Esophagus muscularis mucosa (tissue), 4 donors: ENCODE measurements at regions of chr11 and their contacts with region 1.

Region 1: DNA sequence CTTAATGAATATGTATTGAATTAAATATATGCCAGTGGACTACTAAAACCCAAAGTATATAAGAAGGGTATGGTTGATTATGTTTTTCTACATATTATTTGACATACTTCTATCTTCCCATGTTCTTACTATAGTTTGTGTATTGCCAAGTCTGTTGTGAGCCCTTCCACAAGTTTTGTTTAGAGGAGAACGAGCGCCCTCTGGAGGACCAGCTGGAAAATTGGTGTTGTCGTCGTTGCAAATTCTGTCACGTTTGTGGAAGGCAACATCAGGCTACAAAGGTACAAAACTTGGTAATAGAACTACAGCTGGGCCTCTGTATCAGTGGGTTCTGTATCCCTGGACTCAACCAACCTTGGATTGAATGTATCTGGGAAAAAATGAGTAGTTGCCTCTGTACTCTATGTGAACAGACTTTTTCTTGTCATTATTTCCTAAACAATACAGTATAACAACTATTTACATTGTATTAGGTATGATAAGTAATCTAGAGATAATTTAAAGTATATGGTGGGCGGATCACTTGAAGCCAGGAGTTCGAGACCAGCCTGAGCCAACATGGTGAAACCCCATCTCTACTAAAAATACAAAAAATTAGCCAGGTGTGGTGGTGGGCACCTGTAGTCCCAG is 38.7 kb upstream of the TTC36 start:
- DNase-seq: no peak
- H3K4me3 ChIP-seq: no peak overlapping the region
- H3K27ac ChIP-seq: no peak overlapping the region
- H3K4me1 ChIP-seq: no peaks in the 10 kb centered on the region
- H3K27me3 ChIP-seq: no peaks in the 10 kb centered on the region
- CTCF ChIP-seq: peak; percentile 76 to 82 (median 79)
- EP300 ChIP-seq: no peak
- POLR2A ChIP-seq: no peak

Region 2: GRCh38 chr11:118145285-118146227 is 343.0 kb before region 1 on chr11:
- intact Hi-C with region 1: loop called (anchors 5 kb)
- DNase-seq: peak; percentile 94
- H3K4me3 ChIP-seq: peak overlapping the region; percentile 55 to 84 (median 66)
- H3K27ac ChIP-seq: peak overlapping the region in 3 of 4 donors; percentile 44 to 63 (median 60)
- H3K4me1 ChIP-seq: peaks cover 14 to 17% (median 16%) of the 10 kb centered on the region in 4 donors
- H3K27me3 ChIP-seq: peaks cover 0 to 41% (median 4%) of the 10 kb centered on the region in 4 donors
- CTCF ChIP-seq: peak; percentile 89 to 93 (median 93)
- EP300 ChIP-seq: no peak
- POLR2A ChIP-seq: no peak

Region 3: DNA sequence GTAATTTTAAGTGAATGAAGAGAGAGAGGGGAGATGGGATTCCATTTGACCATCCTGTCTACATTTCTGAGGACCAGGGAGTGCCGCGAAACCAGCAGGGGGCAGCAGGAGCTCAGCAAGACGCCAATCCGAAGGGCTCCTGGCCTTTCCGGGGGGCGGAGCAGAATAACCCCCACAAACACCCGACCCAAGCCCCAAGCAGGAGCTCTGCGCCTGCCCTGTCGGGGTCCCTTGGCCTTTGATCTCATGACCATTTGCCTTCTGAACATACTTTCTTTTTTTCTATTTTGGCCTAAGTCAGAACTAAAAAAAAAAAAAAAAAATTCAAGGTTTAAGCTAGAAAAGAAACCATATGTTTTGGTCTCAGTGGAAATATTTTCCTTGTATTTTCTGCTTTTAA is 290.2 kb before region 1 on chr11:
- intact Hi-C with region 1: loop called (anchors 10 kb)
- DNase-seq: no peak
- H3K4me3 ChIP-seq: peak overlapping the region in 3 of 4 donors; percentile 19 to 36 (median 23)
- H3K27ac ChIP-seq: no peak overlapping the region
- H3K4me1 ChIP-seq: peaks cover 16 to 30% (median 23%) of the 10 kb centered on the region in 4 donors
- H3K27me3 ChIP-seq: no peaks in the 10 kb centered on the region
- CTCF ChIP-seq: peak; percentile 72 to 87 (median 83)
- EP300 ChIP-seq: no peak
- POLR2A ChIP-seq: no peak

Region 4: GRCh38 chr11:118401151-118401878 is 87.3 kb before region 1 on chr11 and contains the start of gene ATP5MG:
- intact Hi-C with region 1: loop called (anchors 2 kb)
- DNase-seq: peak; percentile 94
- H3K4me3 ChIP-seq: peak within 1 kb of the TSS; percentile 72 to 95 (median 86)
- H3K27ac ChIP-seq: peak within 1 kb of the TSS; percentile 80 to 89 (median 86)
- H3K4me1 ChIP-seq: peaks cover 38 to 49% (median 48%) of the 10 kb centered on the region in 4 donors
- H3K27me3 ChIP-seq: no peaks in the 10 kb centered on the region
- CTCF ChIP-seq: peak in 1 of 3 experiments; percentile 19
- EP300 ChIP-seq: no peak
- POLR2A ChIP-seq: peak; percentile 76
- total RNA-seq, gene ATP5MG: 61.0 to 91.1 (median 69.1) TPM